Natural killer cell (primary cell): ENCODE measurements at regions of chr2 and their contacts with region 1.

Region 1: GRCh38 chr2:196149948-196150347 is 21.4 kb downstream of the STK17B start:
- DNase-seq: peak in 1 of 2 donors; percentile 59
- ATAC-seq: peak in 2 of 3 donors; percentile 12 to 46
- H3K4me3 ChIP-seq: no peak overlapping the region
- H3K4me3 Mint-ChIP-seq: peak overlapping the region; percentile 63
- H3K27ac ChIP-seq: peak overlapping the region; percentile 49
- H3K27ac Mint-ChIP-seq: peak overlapping the region; percentile 79
- H3K4me1 ChIP-seq: peaks cover 28% of the 10 kb centered on the region
- H3K4me1 Mint-ChIP-seq: peaks cover 61% of the 10 kb centered on the region in 2 donors
- H3K27me3 ChIP-seq: no peaks in the 10 kb centered on the region
- H3K27me3 Mint-ChIP-seq: no peaks in the 10 kb centered on the region
- CTCF ChIP-seq: no peak

Region 2: DNA sequence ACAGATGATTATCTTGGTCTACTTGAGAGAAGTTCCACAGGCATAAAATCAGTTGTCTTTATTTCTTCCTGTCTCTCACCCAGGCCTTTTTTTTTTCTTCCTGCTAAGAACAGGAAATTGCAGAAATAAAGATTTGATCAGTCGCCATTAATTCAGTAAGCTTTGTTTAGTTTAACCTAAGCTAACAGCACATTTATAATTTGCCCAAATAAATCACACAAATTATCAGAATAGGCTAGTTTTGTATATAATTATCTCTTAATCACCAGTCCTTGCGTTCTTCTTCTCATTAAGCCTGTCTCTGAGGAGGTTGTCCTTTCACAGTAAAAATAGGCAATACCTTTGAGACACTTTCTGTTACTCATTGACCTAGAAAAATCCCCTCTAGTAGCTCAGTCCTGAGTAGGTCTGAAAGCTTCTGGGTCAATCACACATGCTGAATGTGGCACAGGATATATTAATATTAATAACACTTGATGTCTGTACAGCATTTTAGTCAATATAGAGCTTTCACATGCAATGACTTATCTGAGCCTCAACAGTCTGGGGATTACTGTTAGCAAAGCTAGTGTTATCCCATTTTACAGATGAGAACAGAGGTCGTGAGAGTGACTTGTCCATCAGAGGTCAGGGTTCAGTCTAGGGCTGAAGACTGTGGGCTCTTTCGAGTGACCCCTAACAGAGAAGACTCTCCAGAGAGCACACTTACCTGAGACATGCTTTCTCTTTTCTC is 32.7 kb after region 1 on chr2:
- intact Hi-C with region 1: loop called (anchors 5 kb)
- DNase-seq: peak in 1 of 2 donors; percentile 69
- ATAC-seq: peak; percentile 75 to 82 (median 77)
- H3K4me3 ChIP-seq: no peak overlapping the region
- H3K4me3 Mint-ChIP-seq: peak overlapping the region; percentile 69
- H3K27ac ChIP-seq: peak overlapping the region; percentile 88
- H3K27ac Mint-ChIP-seq: peak overlapping the region; percentile 90 to 98
- H3K4me1 ChIP-seq: peaks cover 47% of the 10 kb centered on the region
- H3K4me1 Mint-ChIP-seq: peaks cover 46 to 69% of the 10 kb centered on the region in 2 donors
- H3K27me3 ChIP-seq: no peaks in the 10 kb centered on the region
- H3K27me3 Mint-ChIP-seq: no peaks in the 10 kb centered on the region
- CTCF ChIP-seq: no peak